Activated CD4-positive, alpha-beta T cell treated with anti-CD3 and anti-CD28 coated beads for 36 hours (primary cell): ENCODE measurements at regions of chr4 and their contacts with region 1.

Region 1: GRCh38 chr4:123770884-123771283 is 374.3 kb downstream of the SPRY1 start:
- DNase-seq: no peak
- ATAC-seq: no peak
- H3K4me3 Mint-ChIP-seq: no peak overlapping the region
- H3K27ac Mint-ChIP-seq: no peak overlapping the region
- H3K4me1 Mint-ChIP-seq: peaks cover under 1% of the 10 kb centered on the region
- H3K27me3 Mint-ChIP-seq: no peaks in the 10 kb centered on the region

Region 2: DNA sequence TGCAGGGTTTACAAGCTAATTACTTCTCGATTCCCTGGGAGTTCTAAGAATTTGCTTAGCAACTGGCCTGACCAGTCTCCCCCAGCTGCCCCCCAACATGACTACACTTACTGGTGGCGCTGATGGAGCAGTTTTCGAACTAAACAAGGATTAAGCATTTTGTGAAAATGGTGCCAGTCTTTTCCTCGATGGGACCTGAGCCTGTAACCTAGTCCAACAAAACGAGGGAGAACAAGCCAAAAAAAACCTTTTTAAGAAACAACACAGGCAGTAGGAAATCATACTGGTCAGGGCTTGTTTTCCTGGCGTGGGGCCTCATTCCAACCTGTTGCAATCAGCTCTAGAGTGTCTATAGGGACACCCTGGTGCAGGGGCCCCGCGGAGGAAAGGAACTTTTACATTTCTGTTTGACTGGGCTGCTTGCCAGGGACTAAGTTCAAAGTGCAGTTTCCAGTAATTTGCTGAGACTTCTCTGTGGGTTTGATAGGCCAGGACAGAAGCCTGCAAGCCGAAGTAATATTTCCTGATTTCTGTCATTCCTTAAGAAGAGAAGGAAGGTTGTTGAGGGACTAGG is 215.6 kb before region 1 on chr4:
- CTCF ChIA-PET with region 1: no interaction called
- POLR2A ChIA-PET with region 1: no interaction called
- intact Hi-C with region 1: loop called in 1 of 2 experiments (anchors 5 kb)
- DNase-seq: no peak
- ATAC-seq: no peak
- H3K4me3 Mint-ChIP-seq: no peak overlapping the region
- H3K27ac Mint-ChIP-seq: no peak overlapping the region
- H3K4me1 Mint-ChIP-seq: no peaks in the 10 kb centered on the region
- H3K27me3 Mint-ChIP-seq: peaks cover 2% of the 10 kb centered on the region

Region 3: DNA sequence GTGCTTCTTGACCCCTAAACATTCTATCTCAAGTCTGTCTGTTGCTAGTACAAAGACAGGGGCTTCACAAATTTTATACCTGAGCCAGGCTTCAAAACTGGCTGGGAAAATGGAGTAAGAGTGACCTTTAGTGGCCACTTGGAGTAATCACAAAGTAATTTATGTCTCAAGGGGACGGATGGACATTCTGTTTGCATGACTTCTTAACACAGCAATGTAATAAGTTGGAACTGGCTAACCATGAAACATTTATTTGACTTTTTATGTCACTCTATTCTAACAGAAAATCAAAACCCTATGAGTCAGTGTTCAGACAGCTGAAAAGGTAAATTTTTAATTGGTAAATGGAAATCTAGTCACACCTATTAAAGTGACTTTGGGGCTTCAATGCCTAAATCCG is 341.0 kb after region 1 on chr4:
- CTCF ChIA-PET with region 1: no interaction called
- POLR2A ChIA-PET with region 1: no interaction called
- intact Hi-C with region 1: loop called in 1 of 2 experiments (anchors 5 kb)
- DNase-seq: no peak
- ATAC-seq: no peak
- H3K4me3 Mint-ChIP-seq: no peak overlapping the region
- H3K27ac Mint-ChIP-seq: no peak overlapping the region
- H3K4me1 Mint-ChIP-seq: no peaks in the 10 kb centered on the region
- H3K27me3 Mint-ChIP-seq: peaks cover 4% of the 10 kb centered on the region